PC-3 (cell line): ENCODE measurements at regions of chr18 and their contacts with region 1.

Region 1: GRCh38 chr18:22563098-22563707 is 145.5 kb upstream of the CTAGE1 start:
- DNase-seq: peak; percentile 93
- ATAC-seq: peak; percentile 73
- H3K4me3 ChIP-seq: peak overlapping the region; percentile 29; the same call in 1 of the 2 replicates
- H3K27ac ChIP-seq: peak overlapping the region; percentile 16; the same call in 1 of the 2 replicates
- H3K4me1 ChIP-seq: peaks cover 25% of the 10 kb centered on the region
- H3K27me3 ChIP-seq: no peaks in the 10 kb centered on the region
- CTCF ChIP-seq: peak; percentile 90

Region 2: GRCh38 chr18:21914739-21915319 is 648.4 kb before region 1 on chr18:
- CTCF ChIA-PET with region 1: no interaction called
- POLR2A ChIA-PET with region 1: no interaction called
- intact Hi-C with region 1: loop called (anchors 2 kb)
- DNase-seq: peak; percentile 67
- ATAC-seq: peak; percentile 67
- H3K4me3 ChIP-seq: no peak overlapping the region
- H3K27ac ChIP-seq: no peak overlapping the region
- H3K4me1 ChIP-seq: no peaks in the 10 kb centered on the region
- H3K27me3 ChIP-seq: no peaks in the 10 kb centered on the region
- CTCF ChIP-seq: peak; percentile 87

Region 3: GRCh38 chr18:22108674-22109073 is 454.5 kb before region 1 on chr18:
- CTCF ChIA-PET with region 1: no interaction called
- POLR2A ChIA-PET with region 1: no interaction called
- intact Hi-C with region 1: loop called (anchors 5 kb)
- DNase-seq: no peak
- ATAC-seq: peak; percentile 33
- H3K4me3 ChIP-seq: no peak overlapping the region
- H3K27ac ChIP-seq: no peak overlapping the region
- H3K4me1 ChIP-seq: peaks cover 13% of the 10 kb centered on the region
- H3K27me3 ChIP-seq: no peaks in the 10 kb centered on the region
- CTCF ChIP-seq: peak; percentile 49

Region 4: GRCh38 chr18:22282311-22283112 is 280.7 kb before region 1 on chr18:
- CTCF ChIA-PET with region 1: no interaction called
- POLR2A ChIA-PET with region 1: no interaction called
- intact Hi-C with region 1: loop called (anchors 5 kb)
- DNase-seq: peak; percentile 89
- ATAC-seq: peak; percentile 68
- H3K4me3 ChIP-seq: peak overlapping the region; percentile 19; the same call in 1 of the 2 replicates
- H3K27ac ChIP-seq: peak overlapping the region; percentile 83
- H3K4me1 ChIP-seq: peaks cover 46% of the 10 kb centered on the region
- H3K27me3 ChIP-seq: no peaks in the 10 kb centered on the region
- CTCF ChIP-seq: no peak

Region 5: GRCh38 chr18:22385718-22386117 is 177.5 kb before region 1 on chr18:
- CTCF ChIA-PET with region 1: no interaction called
- POLR2A ChIA-PET with region 1: no interaction called
- intact Hi-C with region 1: loop called (anchors 2 kb)
- DNase-seq: peak; percentile 84
- ATAC-seq: peak; percentile 93
- H3K4me3 ChIP-seq: no peak overlapping the region
- H3K27ac ChIP-seq: peak overlapping the region; percentile 81
- H3K4me1 ChIP-seq: peaks cover 28% of the 10 kb centered on the region
- H3K27me3 ChIP-seq: no peaks in the 10 kb centered on the region
- CTCF ChIP-seq: no peak

Region 6: GRCh38 chr18:22613058-22613691 is 50.0 kb after region 1 on chr18:
- CTCF ChIA-PET with region 1: no interaction called
- POLR2A ChIA-PET with region 1: no interaction called
- intact Hi-C with region 1: no loop called
- DNase-seq: no peak
- ATAC-seq: no peak
- H3K4me3 ChIP-seq: no peak overlapping the region
- H3K27ac ChIP-seq: no peak overlapping the region
- H3K4me1 ChIP-seq: 0 out of 2 replicates have a peak, but pooled peaks cover 10% of the 10 kb centered on the region
- H3K27me3 ChIP-seq: no peaks in the 10 kb centered on the region
- CTCF ChIP-seq: no peak

Region 7: DNA sequence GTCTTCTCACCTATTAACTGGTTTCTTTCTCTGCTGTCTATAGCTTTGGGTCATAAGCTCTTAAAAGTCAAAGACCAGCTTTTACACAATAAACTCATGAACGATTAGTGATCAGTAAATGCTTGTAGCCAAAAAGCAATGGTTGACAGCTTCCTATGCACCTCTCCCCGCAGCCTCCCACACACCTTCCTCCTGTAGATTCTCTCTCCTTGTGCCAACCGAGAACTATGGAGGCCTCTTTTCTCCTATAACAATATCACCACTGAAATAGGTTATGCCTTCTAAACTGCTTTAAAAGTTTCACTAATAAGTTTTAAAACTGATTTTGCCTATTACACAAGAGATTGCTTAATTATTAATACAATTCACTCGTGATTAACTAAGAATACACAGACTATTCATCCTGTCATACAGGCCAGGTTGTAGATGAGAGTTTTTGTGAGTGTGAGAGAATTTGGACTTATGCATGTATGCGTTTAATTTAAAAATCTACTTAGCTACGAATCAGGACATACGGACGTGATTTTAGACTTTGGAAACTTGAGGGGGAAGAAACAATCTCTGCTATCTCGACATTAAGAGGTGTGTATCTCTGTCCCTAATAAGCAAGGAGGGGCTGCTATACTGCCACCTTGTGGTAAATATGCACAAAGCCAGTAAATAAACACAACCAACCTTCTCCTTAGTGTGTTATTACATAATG is 140.8 kb after region 1 on chr18:
- CTCF ChIA-PET with region 1: no interaction called
- POLR2A ChIA-PET with region 1: no interaction called
- intact Hi-C with region 1: loop called (anchors 2 kb)
- DNase-seq: peak; percentile 70
- ATAC-seq: peak; percentile 80
- H3K4me3 ChIP-seq: no peak overlapping the region
- H3K27ac ChIP-seq: no peak overlapping the region
- H3K4me1 ChIP-seq: peaks cover 7% of the 10 kb centered on the region
- H3K27me3 ChIP-seq: no peaks in the 10 kb centered on the region
- CTCF ChIP-seq: peak; percentile 85